Sigmoid colon (tissue), 7 donors: ENCODE measurements at regions of chr11 and their contacts with region 1.

Region 1: GRCh38 chr11:125404776-125405435 is 91.2 kb downstream of the FEZ1 start:
- DNase-seq: peak; percentile 76
- H3K4me3 ChIP-seq: no peak overlapping the region
- H3K27ac ChIP-seq: no peak overlapping the region
- H3K4me1 ChIP-seq: peaks cover 0 to 13% (median 6%) of the 10 kb centered on the region in 4 donors
- H3K27me3 ChIP-seq: no peaks in the 10 kb centered on the region
- CTCF ChIP-seq: peak; percentile 69 to 96 (median 82)
- EP300 ChIP-seq: no peak
- POLR2A ChIP-seq: no peak

Region 2: DNA sequence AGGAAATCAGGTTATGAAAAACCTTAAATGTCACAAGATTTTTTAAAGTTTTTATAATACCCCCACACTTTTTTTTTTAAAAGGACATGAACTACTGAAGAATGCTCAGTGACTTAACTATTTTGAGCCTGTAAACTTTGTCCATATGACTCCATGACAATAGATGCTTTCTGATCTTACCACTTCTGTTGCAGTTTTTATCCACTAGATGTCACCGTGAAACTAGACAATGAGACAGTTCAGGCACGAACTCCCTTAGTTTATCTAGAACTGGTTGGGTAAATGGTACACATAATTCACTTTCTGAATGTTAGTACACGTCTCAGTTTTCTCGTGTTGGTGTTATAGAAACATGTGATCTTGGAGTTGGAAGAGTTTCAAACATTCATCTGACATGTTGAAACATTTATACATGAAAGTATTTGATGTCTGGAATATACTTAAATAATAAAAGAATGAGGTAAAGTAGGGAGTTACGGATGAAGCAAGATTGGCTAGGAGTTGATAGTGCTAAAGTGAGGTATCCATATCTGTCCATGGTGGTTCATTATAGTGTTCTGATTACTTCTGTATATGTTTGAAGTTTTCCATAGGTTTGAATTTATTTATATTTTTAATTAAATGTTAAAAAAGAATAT is 442.8 kb before region 1 on chr11:
- intact Hi-C with region 1: loop called (anchors 5 kb)
- DNase-seq: no peak
- H3K4me3 ChIP-seq: no peak overlapping the region
- H3K27ac ChIP-seq: no peak overlapping the region
- H3K4me1 ChIP-seq: no peaks in the 10 kb centered on the region
- H3K27me3 ChIP-seq: no peaks in the 10 kb centered on the region
- CTCF ChIP-seq: peak; percentile 35 to 69 (median 51)
- EP300 ChIP-seq: no peak
- POLR2A ChIP-seq: no peak

Region 3: DNA sequence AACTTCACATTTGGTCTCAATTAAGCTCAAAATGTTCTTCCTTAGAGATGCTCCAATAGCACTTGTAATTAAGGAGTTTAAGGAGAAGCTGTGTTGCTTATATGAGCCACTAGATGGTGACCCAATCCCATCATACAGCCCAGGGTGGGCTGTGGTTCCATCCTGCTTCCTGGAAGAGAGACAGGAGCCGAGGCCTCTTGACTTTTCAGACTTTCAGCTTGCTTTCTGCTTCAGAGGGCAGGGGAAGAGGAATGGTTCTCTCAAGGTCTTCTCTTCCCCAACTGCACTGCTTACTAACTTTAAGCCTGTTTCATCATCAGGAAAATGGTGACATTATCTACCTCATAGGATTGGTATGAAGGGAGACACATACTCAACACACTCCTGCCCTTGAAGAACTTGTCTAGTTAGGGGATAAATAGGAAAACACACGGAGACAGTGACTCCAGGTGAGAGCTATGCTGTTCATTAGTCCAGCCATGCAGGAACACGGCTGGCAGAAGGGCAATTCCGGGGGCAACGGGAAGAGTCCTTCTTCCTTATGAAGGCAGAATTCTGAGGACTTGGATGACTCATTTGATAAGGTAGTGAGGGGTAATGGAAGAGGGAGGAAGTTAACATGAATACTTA is 313.5 kb before region 1 on chr11:
- intact Hi-C with region 1: loop called (anchors 5 kb)
- DNase-seq: peak; percentile 62
- H3K4me3 ChIP-seq: no peak overlapping the region
- H3K27ac ChIP-seq: no peak overlapping the region
- H3K4me1 ChIP-seq: peaks cover 0 to 7% (median 3%) of the 10 kb centered on the region in 4 donors
- H3K27me3 ChIP-seq: no peaks in the 10 kb centered on the region
- CTCF ChIP-seq: peak; percentile 34 to 58 (median 48)
- EP300 ChIP-seq: no peak
- POLR2A ChIP-seq: no peak

Region 4: GRCh38 chr11:125164422-125165110 is 240.3 kb before region 1 on chr11 and contains the start of gene PKNOX2:
- intact Hi-C with region 1: loop called (anchors 2 kb)
- DNase-seq: peak; percentile 92
- H3K4me3 ChIP-seq: peak within 1 kb of the TSS; percentile 48 to 71 (median 62)
- H3K27ac ChIP-seq: peak within 1 kb of the TSS; percentile 81 to 87 (median 86)
- H3K4me1 ChIP-seq: peaks cover 0 to 37% (median 19%) of the 10 kb centered on the region in 4 donors
- H3K27me3 ChIP-seq: no peaks in the 10 kb centered on the region
- CTCF ChIP-seq: peak in 1 of 4 experiments; percentile 78
- EP300 ChIP-seq: no peak
- POLR2A ChIP-seq: peak in 1 of 2 donors; percentile 23
- total RNA-seq, gene PKNOX2: 1.4 to 4.7 (median 1.7) TPM

Region 5: GRCh38 chr11:125345421-125346178 is 59.3 kb before region 1 on chr11:
- intact Hi-C with region 1: loop called (anchors 5 kb)
- DNase-seq: peak; percentile 92
- H3K4me3 ChIP-seq: no peak overlapping the region
- H3K27ac ChIP-seq: peak overlapping the region; percentile 59 to 65 (median 60)
- H3K4me1 ChIP-seq: peaks cover 0 to 22% (median 19%) of the 10 kb centered on the region in 4 donors
- H3K27me3 ChIP-seq: no peaks in the 10 kb centered on the region
- CTCF ChIP-seq: peak; percentile 71 to 96 (median 84)
- EP300 ChIP-seq: no peak
- POLR2A ChIP-seq: no peak